ENCODE measurements at regions of chr4 and their contacts with region 1.

Region 1: DNA sequence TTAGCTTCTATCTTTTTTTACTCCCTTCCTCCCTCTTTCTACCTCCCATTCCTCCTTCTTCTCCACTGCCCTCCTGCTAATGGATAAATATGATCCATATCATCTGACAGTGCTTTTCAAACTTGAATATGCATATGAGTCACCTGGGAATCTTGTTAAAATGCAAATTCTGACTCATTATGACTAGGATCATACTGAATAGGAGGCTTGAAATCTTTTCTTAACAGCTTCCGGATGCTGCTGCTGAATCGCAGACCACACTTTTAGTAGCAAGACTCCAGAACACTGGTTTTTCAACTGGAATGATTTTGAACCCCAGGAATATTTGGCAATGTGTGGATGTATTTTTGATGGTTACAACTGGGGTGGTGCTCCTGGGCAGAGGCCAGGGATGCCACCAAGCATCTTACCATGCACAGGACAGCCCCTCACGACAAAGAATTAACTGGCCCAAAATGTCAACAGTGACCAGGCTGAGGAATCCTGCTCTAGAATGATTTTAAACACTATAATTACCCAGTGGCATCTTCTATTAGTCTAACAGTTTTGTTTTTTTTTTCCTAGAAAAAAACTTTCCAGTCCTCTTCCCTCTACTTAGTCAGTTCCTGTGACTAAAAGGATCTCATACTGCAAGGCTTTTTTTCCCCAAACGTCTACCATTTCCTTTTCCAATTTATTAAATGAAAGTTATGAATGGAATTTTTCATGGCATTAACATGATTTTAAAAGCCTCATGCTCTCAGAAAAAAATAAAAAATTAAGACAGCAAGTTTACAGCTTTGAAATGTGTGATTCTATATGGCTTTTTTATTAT is 10.6 kb upstream of the PYURF start:
- DNase-seq: no peak
- ATAC-seq: no peak

Region 2: GRCh38 chr4:87783781-87784180 is 750.4 kb before region 1 on chr4:
- intact Hi-C with region 1: no loop called
- DNase-seq: no peak
- ATAC-seq: no peak

Region 3: GRCh38 chr4:88659055-88659889 is 125.1 kb after region 1 on chr4:
- intact Hi-C with region 1: loop called (anchors 10 kb)
- DNase-seq: peak; percentile 58
- ATAC-seq: peak; percentile 95

Region 4: GRCh38 chr4:89009761-89010369 is 475.7 kb after region 1 on chr4:
- intact Hi-C with region 1: loop called (anchors 10 kb)
- DNase-seq: no peak
- ATAC-seq: no peak